ENCODE measurements at regions of chr6 and their contacts with region 1.

Region 1: DNA sequence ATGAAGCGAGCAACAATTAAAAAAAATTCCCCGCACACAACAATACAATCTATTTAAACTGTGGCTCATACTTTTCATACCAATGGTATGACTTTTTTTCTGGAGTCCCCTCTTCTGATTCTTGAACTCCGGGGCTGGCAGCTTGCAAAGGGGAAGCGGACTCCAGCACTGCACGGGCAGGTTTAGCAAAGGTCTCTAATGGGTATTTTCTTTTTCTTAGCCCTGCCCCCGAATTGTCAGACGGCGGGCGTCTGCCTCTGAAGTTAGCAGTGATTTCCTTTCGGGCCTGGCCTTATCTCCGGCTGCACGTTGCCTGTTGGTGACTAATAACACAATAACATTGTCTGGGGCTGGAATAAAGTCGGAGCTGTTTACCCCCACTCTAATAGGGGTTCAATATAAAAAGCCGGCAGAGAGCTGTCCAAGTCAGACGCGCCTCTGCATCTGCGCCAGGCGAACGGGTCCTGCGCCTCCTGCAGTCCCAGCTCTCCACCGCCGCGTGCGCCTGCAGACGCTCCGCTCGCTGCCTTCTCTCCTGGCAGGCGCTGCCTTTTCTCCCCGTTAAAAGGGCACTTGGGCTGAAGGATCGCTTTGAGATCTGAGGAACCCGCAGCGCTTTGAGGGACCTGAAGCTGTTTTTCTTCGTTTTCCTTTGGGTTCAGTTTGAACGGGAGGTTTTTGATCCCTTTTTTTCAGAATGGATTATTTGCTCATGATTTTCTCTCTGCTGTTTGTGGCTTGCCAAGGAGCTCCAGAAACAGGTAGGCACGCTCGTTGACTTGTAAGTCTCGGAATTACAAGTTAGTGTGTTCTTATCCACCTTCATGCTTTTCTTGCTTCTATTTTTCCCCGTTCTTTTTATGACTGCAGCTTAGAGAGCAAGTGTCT is at the start of gene EDN1:
- DNase-seq: peak; percentile 69
- ATAC-seq: peak; percentile 82
- H3K4me3 ChIP-seq: peak within 1 kb of the TSS; percentile 52
- H3K27ac ChIP-seq: peak within 1 kb of the TSS; percentile 4; the same call in 1 of the 2 replicates
- H3K4me1 ChIP-seq: peaks cover 7 to 36% of the 10 kb centered on the region in 2 experiments
- H3K27me3 ChIP-seq: no peaks in the 10 kb centered on the region
- CTCF ChIP-seq: peak; percentile 31 to 49 (median 40); a peak in 4 of 6 replicates
- POLR2A ChIP-seq: no peak
- RAD21 ChIP-seq: peak; percentile 31
- total RNA-seq, gene EDN1: 0.22 TPM

Region 2: GRCh38 chr6:11618533-11618932 is 671.6 kb before region 1 on chr6:
- CTCF ChIA-PET with region 1: interaction called, 4 read pairs
- POLR2A ChIA-PET with region 1: no interaction called
- RAD21 ChIA-PET with region 1: no interaction called
- intact Hi-C with region 1: loop called (anchors 1 kb)
- DNase-seq: peak; percentile 22
- ATAC-seq: peak; percentile 88
- H3K4me3 ChIP-seq: no peak overlapping the region
- H3K27ac ChIP-seq: no peak overlapping the region
- H3K4me1 ChIP-seq: peaks cover 8 to 12% of the 10 kb centered on the region in 2 experiments
- H3K27me3 ChIP-seq: no peaks in the 10 kb centered on the region
- CTCF ChIP-seq: peak; percentile 46 to 58 (median 48); a peak in 5 of 6 replicates
- POLR2A ChIP-seq: no peak
- RAD21 ChIP-seq: peak; percentile 68

Region 3: DNA sequence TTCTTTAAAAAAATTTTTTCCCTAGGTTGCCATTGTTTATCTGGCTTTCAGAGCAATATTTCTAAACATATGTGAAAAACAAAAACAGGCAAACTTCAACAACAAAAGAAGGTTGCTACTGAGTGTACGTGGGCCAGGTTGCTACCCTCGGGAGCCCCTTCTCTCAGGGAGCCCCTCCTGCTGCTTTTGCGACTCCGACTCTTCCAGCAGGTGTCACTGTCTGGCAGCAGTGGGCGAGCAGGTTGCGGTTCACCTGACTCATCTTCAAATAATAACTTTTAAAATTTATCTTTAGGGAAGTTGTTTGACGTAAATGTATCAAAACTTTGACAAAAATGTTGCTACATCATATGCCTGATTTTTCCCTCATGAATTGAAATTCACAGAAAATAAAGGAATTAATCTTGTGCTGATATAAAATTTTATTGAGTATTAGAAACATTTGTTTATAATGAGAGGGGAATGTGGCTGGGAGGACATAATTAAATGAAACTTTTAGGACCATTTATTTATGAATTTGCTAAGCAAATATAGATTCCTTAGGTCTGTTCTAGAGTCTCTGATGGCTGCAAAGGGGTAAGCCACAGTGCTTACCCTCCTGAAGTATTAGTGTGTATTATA is 139.3 kb before region 1 on chr6:
- CTCF ChIA-PET with region 1: no interaction called
- POLR2A ChIA-PET with region 1: no interaction called
- RAD21 ChIA-PET with region 1: no interaction called
- intact Hi-C with region 1: loop called (anchors 2 kb)
- DNase-seq: peak; percentile 19
- ATAC-seq: peak; percentile 84
- H3K4me3 ChIP-seq: no peak overlapping the region
- H3K27ac ChIP-seq: no peak overlapping the region
- H3K4me1 ChIP-seq: peaks cover 0 to 10% of the 10 kb centered on the region in 2 experiments; a peak in 2 of 4 replicates
- H3K27me3 ChIP-seq: no peaks in the 10 kb centered on the region
- CTCF ChIP-seq: peak; percentile 66 to 89 (median 83)
- POLR2A ChIP-seq: no peak
- RAD21 ChIP-seq: peak; percentile 79

Region 4: GRCh38 chr6:12483712-12484111 is 193.5 kb after region 1 on chr6:
- CTCF ChIA-PET with region 1: interaction called, 21 read pairs
- POLR2A ChIA-PET with region 1: no interaction called
- RAD21 ChIA-PET with region 1: no interaction called
- intact Hi-C with region 1: loop called (anchors 5 kb)
- DNase-seq: peak; percentile 77
- ATAC-seq: peak; percentile 85
- H3K4me3 ChIP-seq: peak overlapping the region in 1 of 2 experiments; percentile 32; a peak in 2 of 4 replicates
- H3K27ac ChIP-seq: no peak overlapping the region; the same call in 1 of the 2 replicates
- H3K4me1 ChIP-seq: peaks cover 10 to 31% of the 10 kb centered on the region in 2 experiments
- H3K27me3 ChIP-seq: no peaks in the 10 kb centered on the region
- CTCF ChIP-seq: no peak
- POLR2A ChIP-seq: no peak
- RAD21 ChIP-seq: no peak

Region 5: DNA sequence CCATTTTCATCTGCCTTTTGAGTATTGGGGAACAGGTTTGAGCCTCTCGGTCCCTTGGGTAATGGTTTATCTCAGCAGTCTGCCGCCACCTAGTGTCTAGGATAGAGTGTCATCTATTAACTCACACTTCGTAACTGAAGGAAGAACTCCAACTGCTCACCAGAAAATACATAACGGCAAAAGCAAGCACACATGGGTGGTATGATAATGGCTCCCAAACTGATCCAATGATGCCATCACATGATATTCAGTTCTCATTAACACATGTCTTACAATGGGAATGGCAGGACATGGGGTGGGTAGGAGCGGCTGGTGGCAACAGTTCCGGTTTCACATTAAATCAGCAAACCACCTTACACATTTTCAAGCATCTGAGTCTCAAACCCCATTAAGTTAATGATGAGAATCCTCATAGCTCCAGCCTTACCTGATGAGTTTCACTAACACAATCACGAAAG is 315.7 kb after region 1 on chr6:
- CTCF ChIA-PET with region 1: interaction called, 31 read pairs
- POLR2A ChIA-PET with region 1: interaction called, 3 read pairs
- RAD21 ChIA-PET with region 1: no interaction called
- intact Hi-C with region 1: loop called (anchors 1 kb)
- DNase-seq: peak; percentile 65
- ATAC-seq: peak; percentile 95
- H3K4me3 ChIP-seq: peak overlapping the region in 1 of 2 experiments; percentile 6; a peak in 1 of 4 replicates
- H3K27ac ChIP-seq: no peak overlapping the region
- H3K4me1 ChIP-seq: no peaks in the 10 kb centered on the region; a peak in 1 of 4 replicates
- H3K27me3 ChIP-seq: no peaks in the 10 kb centered on the region
- CTCF ChIP-seq: peak; percentile 58 to 82 (median 68); a peak in 5 of 6 replicates
- POLR2A ChIP-seq: no peak
- RAD21 ChIP-seq: peak; percentile 84